ENCODE measurements at regions of chr12 and their contacts with region 1.

Region 1: DNA sequence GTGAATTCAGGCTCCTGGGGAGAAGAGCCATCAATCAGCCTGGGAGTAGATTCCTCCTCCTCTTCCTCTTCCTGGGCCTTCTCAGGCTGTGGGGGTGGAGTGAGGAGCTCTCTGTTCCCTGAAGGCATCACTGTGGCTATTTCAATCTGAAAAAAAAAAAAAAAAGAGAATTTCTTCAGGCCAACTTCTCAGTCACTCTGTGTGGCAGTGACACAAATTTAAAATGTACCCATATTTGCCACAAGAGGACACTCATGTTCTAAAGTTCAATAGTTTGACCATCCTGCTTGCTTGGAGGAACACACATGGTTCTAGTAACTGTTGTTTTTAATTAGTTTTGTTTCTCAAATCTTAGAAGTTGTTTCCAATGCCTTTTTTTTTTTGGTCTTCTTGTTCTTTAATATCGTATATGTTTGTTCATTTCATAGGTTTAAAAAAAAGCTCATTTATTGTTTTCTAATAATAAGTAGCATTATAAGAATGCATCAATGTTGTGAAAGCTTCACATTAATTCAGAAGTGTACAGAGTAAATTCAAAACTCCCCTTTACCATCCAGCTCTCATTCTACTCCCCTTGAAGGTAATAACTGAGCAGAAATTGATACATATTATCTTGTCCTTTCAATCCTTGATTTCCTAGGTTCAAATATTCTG is 23.3 kb upstream of the CCER1 start:
- DNase-seq: peak in 2 of 3 donors; percentile 22 to 60
- ATAC-seq: peak; percentile 74 to 95
- H3K4me3 ChIP-seq: no peak overlapping the region
- H3K27ac ChIP-seq: no peak overlapping the region
- H3K4me1 ChIP-seq: no peaks in the 10 kb centered on the region
- H3K27me3 ChIP-seq: no peaks in the 10 kb centered on the region

Region 2: DNA sequence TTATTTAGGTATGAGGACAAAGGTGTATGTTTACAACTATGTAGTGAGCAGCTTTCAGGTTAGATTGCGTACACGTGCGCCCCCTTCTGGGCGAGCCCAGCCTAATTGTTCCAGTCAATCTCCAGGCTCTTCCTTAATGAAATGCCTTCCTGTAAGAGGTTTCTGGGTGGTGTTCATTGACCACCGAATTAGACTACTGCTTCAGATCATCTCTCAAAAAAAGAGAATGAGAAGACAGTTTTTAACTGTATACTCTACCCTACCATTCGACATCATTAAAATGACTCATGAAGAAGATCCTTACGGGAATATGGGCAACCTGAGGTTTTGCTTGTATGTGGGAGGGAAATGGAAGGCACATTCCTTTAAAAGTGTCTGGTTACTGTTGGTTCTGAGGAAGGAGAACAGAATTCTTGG is 130.9 kb after region 1 on chr12:
- intact Hi-C with region 1: loop called in 3 of 4 experiments (anchors 5 to 10 kb)
- DNase-seq: peak; percentile 73 to 95 (median 88)
- ATAC-seq: peak; percentile 80 to 81
- H3K4me3 ChIP-seq: peak overlapping the region; percentile 52
- H3K27ac ChIP-seq: no peak overlapping the region
- H3K4me1 ChIP-seq: no peaks in the 10 kb centered on the region
- H3K27me3 ChIP-seq: no peaks in the 10 kb centered on the region

Region 3: DNA sequence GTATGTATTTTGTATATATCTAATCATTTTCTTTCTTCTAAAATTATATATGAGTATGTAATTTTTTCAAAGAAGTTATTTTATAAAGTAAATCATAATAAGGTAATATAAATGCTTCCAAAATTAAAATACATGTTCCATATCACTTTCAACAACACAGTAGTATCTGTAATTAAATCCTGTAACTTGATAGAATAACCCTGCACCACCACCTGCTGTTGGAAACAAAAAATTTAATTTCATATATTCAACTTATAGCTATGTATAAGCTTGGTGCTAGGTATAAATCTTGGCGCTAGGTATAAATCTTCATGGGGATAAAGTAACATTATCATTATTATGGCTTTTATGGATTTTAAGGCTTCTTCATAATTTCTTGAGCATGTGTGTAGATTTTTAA is 354.1 kb after region 1 on chr12:
- intact Hi-C with region 1: loop called in 2 of 4 experiments (anchors 5 to 10 kb)
- DNase-seq: no peak
- ATAC-seq: no peak
- H3K4me3 ChIP-seq: no peak overlapping the region
- H3K27ac ChIP-seq: no peak overlapping the region
- H3K4me1 ChIP-seq: no peaks in the 10 kb centered on the region
- H3K27me3 ChIP-seq: no peaks in the 10 kb centered on the region

Region 4: DNA sequence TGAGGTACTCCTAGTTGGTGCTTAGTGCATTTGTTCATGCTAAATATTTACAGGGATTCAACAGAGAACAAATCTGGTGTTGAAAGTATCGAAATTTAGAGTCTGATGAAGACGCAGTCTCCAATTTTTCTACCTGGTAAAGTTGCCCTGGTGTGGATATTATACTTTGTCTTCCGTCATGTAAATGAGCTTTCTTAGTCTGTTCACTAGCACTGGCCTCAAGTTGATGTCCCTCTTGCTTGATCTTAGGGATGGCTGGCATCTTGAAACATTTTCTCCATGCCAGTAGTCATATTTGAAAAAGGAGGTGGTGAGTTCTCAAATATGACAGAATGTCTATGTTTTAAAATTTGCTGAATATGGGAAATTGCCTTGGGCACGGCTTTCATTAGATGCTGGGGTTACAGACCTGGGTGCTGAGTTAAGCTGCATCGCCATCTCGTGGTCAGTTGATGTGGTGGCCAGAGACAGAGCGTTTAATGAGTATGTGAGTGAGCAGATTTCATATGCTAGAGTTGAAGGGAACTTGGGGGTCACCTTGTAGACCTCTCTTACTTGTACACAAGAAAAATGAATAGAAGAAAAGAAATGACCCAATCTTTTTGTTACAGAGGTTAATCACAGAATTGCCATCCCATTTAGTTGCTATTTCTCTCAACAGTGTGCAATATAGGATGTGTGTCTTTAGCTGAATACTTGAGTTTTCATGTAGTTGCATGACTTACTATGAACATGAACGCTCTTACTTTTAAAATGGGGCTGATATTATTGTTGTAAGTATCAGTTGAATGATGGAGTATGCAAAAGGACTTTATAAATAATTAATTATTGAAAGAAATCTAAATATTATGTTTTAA is 377.1 kb after region 1 on chr12:
- intact Hi-C with region 1: loop called (anchors 5 to 10 kb)
- DNase-seq: peak; percentile 72 to 85 (median 74)
- ATAC-seq: peak; percentile 93 to 94
- H3K4me3 ChIP-seq: no peak overlapping the region
- H3K27ac ChIP-seq: no peak overlapping the region
- H3K4me1 ChIP-seq: no peaks in the 10 kb centered on the region
- H3K27me3 ChIP-seq: no peaks in the 10 kb centered on the region

Measured in right cardiac atrium (tissue), 5 donors.